ENCODE measurements at regions of chrX and their contacts with region 1.

Region 1: GRCh38 chrX:23901805-23902204 is 5.9 kb downstream of the APOO start:
- DNase-seq: no peak

Region 2: GRCh38 chrX:23782863-23783568 is 118.8 kb before region 1 on chrX and contains the start of gene SAT1:
- intact Hi-C with region 1: loop called (anchors 1 kb)
- DNase-seq: peak; percentile 97
- total RNA-seq, gene SAT1: 156 TPM

Region 3: DNA sequence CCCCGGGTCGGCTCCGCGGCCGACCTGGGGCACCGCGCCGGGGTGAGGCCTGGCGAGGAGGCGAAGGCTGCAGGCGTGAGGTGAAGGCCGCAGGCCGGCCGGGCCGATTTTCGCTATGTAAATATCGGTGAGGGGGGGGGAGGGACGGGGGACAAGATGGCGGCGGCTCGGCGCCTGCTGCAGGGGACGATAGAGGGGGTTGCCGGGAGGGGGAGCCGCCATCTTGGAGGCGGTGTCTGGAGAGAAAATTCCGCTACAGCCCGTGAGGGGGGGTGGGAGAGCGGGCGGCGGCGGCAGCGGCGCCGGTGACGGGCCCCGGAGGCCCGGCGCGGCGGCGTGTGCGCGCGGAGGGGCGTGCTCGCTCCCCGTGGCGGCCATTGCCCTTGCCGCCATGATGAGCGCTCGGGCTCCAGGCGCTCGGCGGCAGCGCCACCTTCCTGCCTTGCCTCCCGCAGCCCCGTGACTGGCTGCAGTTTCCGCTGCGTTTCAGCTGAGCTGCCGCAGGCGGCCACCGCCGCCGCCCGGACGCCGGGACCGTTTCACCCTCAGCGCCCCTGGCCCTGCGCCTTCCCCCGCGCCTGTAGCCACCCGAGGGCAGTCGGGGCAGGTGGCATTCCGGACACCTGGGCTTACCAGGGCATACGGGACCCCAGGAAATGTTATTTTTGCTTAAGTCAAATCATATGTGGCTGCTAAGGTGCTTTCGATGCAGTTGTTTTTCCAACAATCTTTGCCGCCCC is 248.4 kb after region 1 on chrX:
- intact Hi-C with region 1: no loop called
- DNase-seq: peak; percentile 96